ENCODE measurements at regions of chr6 and their contacts with region 1.

Region 1: DNA sequence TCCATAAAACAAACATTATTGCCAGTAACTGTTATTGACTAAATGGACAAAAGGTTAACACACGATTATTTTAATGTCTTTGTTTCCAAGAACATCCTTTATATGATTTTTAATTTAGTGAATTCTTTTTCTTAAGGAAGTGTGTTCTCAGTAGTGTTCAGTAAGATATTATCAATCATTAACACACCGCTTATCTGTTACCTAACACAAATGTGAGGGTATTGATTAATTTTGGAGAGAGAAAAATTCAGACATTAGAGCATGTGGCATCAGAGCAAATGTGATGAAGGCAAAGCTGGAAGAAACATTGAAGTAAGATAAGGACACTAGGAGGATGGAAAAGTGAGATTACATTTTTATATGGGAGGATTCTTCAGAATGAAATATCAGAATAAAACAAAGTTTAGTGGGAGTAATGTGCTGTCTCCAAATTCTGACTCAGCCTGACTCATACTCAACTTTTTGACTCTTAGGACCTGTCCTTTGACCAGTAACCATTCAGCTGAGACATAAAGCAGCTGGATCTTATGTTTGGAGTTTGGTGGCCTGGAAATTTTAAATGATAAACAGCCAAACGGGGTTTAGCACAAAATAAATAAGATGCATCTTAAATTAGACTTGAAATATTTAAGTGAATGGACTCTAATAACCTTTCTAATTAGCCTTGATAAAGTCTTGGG is 348.6 kb downstream of the CD109 start:
- DNase-seq: no peak

Region 2: GRCh38 chr6:73879501-73880293 is 164.9 kb before region 1 on chr6:
- intact Hi-C with region 1: no loop called
- DNase-seq: peak; percentile 68

Region 3: GRCh38 chr6:74000666-74001490 is 43.7 kb before region 1 on chr6:
- intact Hi-C with region 1: loop called (anchors 5 kb)
- DNase-seq: no peak